ENCODE measurements at regions of chr10 and their contacts with region 1.

Region 1: GRCh38 chr10:102835007-102835482 is 2.2 kb downstream of the CYP17A1 start:
- DNase-seq: peak; percentile 78 to 82 (median 80)
- ATAC-seq: peak; percentile 99
- H3K4me3 ChIP-seq: no peak overlapping the region
- H3K27ac ChIP-seq: no peak overlapping the region
- H3K4me1 ChIP-seq: peaks cover 9% of the 10 kb centered on the region in 2 experiments; a peak in 4 of 5 replicates
- H3K27me3 ChIP-seq: no peaks in the 10 kb centered on the region
- CTCF ChIP-seq: peak; percentile 69 to 79 (median 76)
- EP300 ChIP-seq: no peak
- POLR2A ChIP-seq: no peak
- RAD21 ChIP-seq: peak; percentile 77 to 90

Region 2: DNA sequence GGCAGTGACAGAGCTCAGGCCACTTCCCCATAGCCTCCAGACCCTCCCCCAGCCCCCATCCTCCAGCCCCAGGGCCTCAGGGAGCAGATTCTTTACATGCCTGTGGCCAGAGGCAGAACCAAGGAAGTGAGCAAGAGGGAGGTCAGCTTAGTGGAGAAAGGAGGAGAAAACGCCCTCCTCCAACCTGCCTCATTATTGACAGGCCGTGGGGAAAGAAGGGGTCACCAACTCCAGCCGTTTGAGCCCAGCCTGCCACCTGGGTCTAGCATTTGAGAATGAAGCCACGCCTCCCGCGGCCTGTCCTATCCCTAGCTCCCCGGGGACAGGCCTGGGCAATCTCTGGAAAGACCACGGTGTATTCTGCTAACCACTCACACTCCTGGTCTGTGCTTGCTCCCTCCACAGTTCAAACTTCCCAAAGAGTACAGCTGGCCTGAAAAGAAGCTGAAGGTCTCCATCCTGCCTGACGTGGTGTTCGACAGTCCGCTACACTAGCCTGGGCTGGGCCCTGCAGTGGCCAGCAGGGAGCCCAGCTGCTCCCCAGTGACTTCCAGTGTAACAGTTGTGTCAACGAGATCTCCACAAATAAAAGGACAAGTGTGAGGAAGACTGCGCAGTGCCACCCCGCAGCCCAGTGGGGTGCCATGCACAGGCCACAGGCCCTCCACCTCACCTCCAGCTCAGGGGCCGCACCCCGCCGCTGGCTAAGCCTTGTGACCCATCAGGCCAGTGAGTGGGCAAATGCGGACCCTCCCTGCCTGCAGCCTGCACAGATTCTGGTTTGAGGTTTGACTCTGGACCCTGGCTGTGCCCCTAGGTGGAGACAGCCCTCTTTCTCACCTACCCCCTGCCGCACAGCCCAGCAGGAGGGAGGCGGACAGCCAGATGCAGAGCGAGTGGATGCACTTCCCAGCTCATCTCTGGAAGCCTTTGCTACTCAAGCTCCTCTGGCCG is 205.1 kb before region 1 on chr10:
- CTCF ChIA-PET with region 1: no interaction called
- POLR2A ChIA-PET with region 1: no interaction called
- in situ Hi-C with region 1: no loop called
- intact Hi-C with region 1: no loop called
- DNase-seq: no peak
- ATAC-seq: no peak
- H3K4me3 ChIP-seq: no peak overlapping the region
- H3K27ac ChIP-seq: no peak overlapping the region
- H3K4me1 ChIP-seq: peaks cover 2 to 12% of the 10 kb centered on the region in 2 experiments; a peak in 3 of 5 replicates
- H3K27me3 ChIP-seq: no peaks in the 10 kb centered on the region
- CTCF ChIP-seq: no peak
- EP300 ChIP-seq: no peak
- POLR2A ChIP-seq: no peak
- RAD21 ChIP-seq: no peak

Region 3: DNA sequence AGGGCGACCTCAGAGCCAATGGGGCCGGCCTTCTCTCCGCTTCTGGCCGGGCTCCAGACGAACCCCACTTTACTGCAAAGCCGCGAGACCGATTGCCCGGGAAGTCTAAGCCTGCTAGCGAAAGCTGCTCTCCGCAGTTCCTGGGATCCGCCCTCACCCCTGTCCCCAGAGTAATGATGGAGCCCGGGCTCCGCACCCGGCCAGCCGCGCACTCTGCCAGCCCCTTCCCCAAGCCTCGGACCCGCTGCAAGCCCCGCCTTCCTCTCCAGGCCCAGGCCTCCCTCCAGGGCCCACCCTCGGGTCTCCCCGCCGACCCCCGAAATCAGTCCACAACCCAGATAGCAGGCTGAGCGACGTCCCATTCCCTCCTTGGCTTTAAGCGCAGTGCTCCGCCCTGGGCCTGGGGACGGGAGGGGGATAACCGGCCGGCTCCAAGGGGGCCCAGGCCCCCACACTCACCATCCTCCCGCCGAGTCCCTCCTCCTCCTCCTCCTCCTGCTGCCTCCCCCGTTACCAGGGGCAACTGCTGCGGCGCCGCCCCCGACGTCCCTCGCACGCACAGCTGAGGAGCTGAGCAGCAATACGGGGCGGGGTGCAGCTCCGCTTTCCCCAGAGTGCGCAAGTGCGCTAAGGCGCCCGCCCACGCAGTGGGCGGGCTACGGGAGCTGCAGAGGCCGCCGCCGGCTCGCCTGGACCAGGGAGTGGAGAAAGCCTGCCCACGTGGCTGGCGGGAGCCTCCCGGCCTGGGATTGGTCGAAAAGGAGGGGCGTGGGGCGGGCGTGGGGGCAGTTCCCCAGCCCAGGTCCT is 121.0 kb before region 1 on chr10 and contains the start of gene ARL3:
- CTCF ChIA-PET with region 1: no interaction called
- POLR2A ChIA-PET with region 1: no interaction called
- in situ Hi-C with region 1: no loop called
- intact Hi-C with region 1: no loop called
- DNase-seq: peak; percentile 93 to 97 (median 95)
- ATAC-seq: peak; percentile 91
- H3K4me3 ChIP-seq: peak within 1 kb of the TSS; percentile 95
- H3K27ac ChIP-seq: peak within 1 kb of the TSS; percentile 83
- H3K4me1 ChIP-seq: peaks cover 20% of the 10 kb centered on the region in 2 experiments; a peak in 4 of 5 replicates
- H3K27me3 ChIP-seq: no peaks in the 10 kb centered on the region
- CTCF ChIP-seq: peak in 1 of 3 experiments; percentile 51; a peak in 3 of 6 replicates
- EP300 ChIP-seq: no peak
- POLR2A ChIP-seq: no peak
- RAD21 ChIP-seq: no peak
- polyA plus RNA-seq, gene ARL3: 8.2 to 8.9 TPM

Region 4: DNA sequence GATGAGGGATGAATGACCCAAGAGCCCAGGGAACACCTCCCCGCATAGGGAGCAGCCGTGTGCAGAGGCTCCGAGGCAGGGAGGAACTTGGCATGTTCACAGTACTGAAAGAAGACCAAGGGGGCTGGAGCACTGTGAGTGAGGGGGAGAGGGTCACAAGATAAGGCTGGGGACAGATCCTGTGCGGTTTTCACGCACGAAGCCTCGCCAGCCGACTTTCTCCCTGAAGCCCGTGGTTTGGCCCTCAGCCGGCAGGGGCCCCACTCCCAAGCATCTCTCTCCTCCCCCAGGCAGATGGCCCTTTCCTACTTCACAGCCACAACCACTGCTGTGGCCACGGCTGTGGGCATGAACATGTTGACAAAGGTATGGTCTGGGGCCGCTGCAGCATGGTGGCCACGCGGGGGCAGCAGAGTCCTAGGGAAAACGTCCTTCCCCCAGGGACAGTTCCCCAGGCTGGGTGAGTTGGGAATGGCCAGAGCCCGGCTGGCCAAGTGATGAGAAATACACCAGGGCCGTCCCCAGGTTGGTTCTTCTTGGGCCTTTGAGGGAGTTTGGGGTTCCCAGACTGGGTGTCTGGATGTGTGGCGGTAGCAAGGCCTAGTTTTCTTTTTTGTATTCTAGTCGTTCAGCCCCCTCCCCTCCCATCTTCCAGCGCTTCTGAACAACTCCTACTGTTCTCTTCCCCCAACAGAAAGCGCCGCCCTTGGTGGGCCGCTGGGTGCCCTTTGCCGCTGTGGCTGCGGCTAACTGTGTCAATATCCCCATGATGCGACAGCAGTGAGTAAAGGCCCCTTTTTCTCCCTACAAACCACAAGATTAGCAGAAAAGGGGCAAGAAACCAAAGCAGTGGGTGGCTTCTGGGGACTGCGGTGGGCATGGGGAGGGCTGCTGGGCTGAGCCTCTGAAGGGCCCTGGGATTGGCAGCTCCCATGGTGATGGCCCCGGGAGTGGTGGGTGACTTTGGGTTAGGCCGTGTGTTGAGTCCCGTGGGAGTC is 105.7 kb before region 1 on chr10:
- CTCF ChIA-PET with region 1: no interaction called
- POLR2A ChIA-PET with region 1: no interaction called
- in situ Hi-C with region 1: loop called (anchors 5 kb)
- intact Hi-C with region 1: loop called (anchors 5 kb)
- DNase-seq: peak; percentile 69 to 76 (median 70)
- ATAC-seq: peak; percentile 99
- H3K4me3 ChIP-seq: no peak overlapping the region
- H3K27ac ChIP-seq: no peak overlapping the region
- H3K4me1 ChIP-seq: peaks cover 0 to 5% of the 10 kb centered on the region in 2 experiments; a peak in 1 of 5 replicates
- H3K27me3 ChIP-seq: no peaks in the 10 kb centered on the region
- CTCF ChIP-seq: peak; percentile 79 to 86 (median 82)
- EP300 ChIP-seq: no peak
- POLR2A ChIP-seq: no peak
- RAD21 ChIP-seq: peak; percentile 87 to 89

Region 5: DNA sequence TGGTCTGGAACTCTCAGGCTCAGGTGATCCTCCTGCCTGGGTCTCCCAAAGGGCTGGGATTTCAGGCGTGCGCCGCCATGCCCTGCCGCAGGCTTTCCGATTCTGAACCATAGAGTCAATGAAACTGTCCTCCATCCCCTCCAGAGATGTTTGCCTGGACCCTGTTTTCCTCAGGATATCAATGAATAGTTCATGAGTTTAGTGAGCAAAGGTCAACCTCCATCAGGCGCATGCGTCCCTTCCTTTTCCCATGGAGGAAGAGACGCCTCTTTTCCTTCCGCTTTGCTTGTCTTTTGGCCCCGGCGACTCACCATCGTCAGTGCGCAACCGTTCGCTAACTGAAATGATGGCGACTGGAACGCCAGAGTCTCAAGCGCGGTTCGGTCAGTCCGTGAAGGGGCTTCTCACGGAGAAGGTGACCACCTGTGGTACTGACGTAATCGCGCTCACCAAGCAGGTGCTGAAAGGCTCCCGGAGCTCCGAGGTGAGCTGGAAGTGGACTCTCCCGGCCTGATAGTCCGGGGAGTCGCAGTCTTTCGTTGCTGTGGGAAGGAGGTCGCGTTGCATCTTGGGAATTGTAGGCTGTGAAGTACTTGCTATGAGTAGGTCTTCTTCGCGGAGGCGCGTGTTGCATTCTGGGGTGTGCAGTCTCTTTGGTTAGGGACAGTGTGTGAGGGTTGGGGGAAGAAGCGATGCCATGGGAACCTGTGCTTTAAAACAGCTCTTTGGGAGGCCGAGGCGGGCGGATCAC is 19.1 kb after region 1 on chr10 and contains the start of gene BORCS7:
- CTCF ChIA-PET with region 1: no interaction called
- POLR2A ChIA-PET with region 1: no interaction called
- in situ Hi-C with region 1: no loop called
- intact Hi-C with region 1: no loop called
- DNase-seq: peak; percentile 71 to 94 (median 78)
- ATAC-seq: peak; percentile 98
- H3K4me3 ChIP-seq: peak within 1 kb of the TSS; percentile 95
- H3K27ac ChIP-seq: peak within 1 kb of the TSS; percentile 99
- H3K4me1 ChIP-seq: peaks cover 7 to 20% of the 10 kb centered on the region in 2 experiments; a peak in 3 of 5 replicates
- H3K27me3 ChIP-seq: no peaks in the 10 kb centered on the region
- CTCF ChIP-seq: no peak
- EP300 ChIP-seq: peak; percentile 56; the same call in 1 of the 2 replicates
- POLR2A ChIP-seq: peak; percentile 94
- RAD21 ChIP-seq: no peak
- polyA plus RNA-seq, gene BORCS7: 14.0 to 17.0 TPM

Region 6: GRCh38 chr10:102904346-102904745 is 69.3 kb after region 1 on chr10:
- CTCF ChIA-PET with region 1: interaction called, 5 read pairs
- POLR2A ChIA-PET with region 1: interaction called, 4 read pairs
- in situ Hi-C with region 1: no loop called
- intact Hi-C with region 1: loop called (anchors 1 kb)
- DNase-seq: no peak
- ATAC-seq: no peak
- H3K4me3 ChIP-seq: no peak overlapping the region
- H3K27ac ChIP-seq: no peak overlapping the region
- H3K4me1 ChIP-seq: no peaks in the 10 kb centered on the region
- H3K27me3 ChIP-seq: no peaks in the 10 kb centered on the region
- CTCF ChIP-seq: no peak
- EP300 ChIP-seq: no peak
- POLR2A ChIP-seq: no peak
- RAD21 ChIP-seq: no peak

Region 7: GRCh38 chr10:103053659-103054581 is 218.9 kb after region 1 on chr10:
- CTCF ChIA-PET with region 1: no interaction called
- POLR2A ChIA-PET with region 1: no interaction called
- in situ Hi-C with region 1: loop called (anchors 5 kb)
- intact Hi-C with region 1: no loop called
- DNase-seq: peak in 3 of 4 experiments; percentile 12 to 65 (median 45)
- ATAC-seq: peak; percentile 99
- H3K4me3 ChIP-seq: no peak overlapping the region
- H3K27ac ChIP-seq: no peak overlapping the region
- H3K4me1 ChIP-seq: peaks cover 0 to 6% of the 10 kb centered on the region in 2 experiments; a peak in 2 of 5 replicates
- H3K27me3 ChIP-seq: no peaks in the 10 kb centered on the region
- CTCF ChIP-seq: peak; percentile 46 to 55 (median 52); a peak in 5 of 6 replicates
- EP300 ChIP-seq: no peak
- POLR2A ChIP-seq: no peak
- RAD21 ChIP-seq: peak; percentile 17 to 54; a peak in 3 of 4 replicates

Region 8: DNA sequence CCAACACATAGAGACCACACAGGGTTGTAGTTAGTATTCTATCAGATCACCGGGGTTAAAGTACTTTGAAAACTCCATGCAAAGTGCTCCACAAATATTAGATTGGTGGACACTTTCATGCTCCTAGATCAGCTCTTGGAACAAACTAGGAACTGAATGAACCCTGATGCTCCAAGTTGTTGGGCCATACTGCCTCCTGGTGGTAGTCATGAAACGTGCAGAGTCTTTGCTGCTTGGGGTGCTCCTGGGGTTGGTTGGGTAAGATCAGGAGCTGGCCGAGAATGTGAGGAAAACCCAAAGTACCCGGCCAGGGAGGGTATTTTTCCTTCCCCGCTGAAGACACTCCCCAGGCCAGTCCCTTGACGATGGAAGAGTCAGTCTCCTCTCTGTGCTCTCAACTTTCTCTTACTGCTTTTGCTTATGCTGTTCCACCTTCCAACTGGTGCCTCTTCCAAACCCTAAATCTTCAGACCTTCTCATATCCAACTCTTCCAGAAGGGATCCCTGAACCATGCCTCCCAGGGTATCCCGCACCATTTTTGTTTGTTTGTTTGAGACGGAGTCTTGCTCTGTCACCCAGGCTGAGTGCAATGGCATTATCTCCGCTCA is 409.7 kb after region 1 on chr10:
- CTCF ChIA-PET with region 1: interaction called, 11 read pairs
- POLR2A ChIA-PET with region 1: no interaction called
- in situ Hi-C with region 1: loop called (anchors 10 kb)
- intact Hi-C with region 1: loop called (anchors 2 kb)
- DNase-seq: peak; percentile 72 to 76 (median 74)
- ATAC-seq: peak; percentile 94
- H3K4me3 ChIP-seq: no peak overlapping the region
- H3K27ac ChIP-seq: no peak overlapping the region
- H3K4me1 ChIP-seq: no peaks in the 10 kb centered on the region
- H3K27me3 ChIP-seq: no peaks in the 10 kb centered on the region
- CTCF ChIP-seq: peak; percentile 71 to 84 (median 79)
- EP300 ChIP-seq: no peak
- POLR2A ChIP-seq: no peak
- RAD21 ChIP-seq: peak; percentile 81 to 91